ENCODE measurements at regions of chr2 and their contacts with region 1.

Region 1: GRCh38 chr2:174341286-174341994 is 6.7 kb downstream of the SP9 start:
- DNase-seq: peak; percentile 80 to 92 (median 87)
- ATAC-seq: peak; percentile 78
- H3K4me3 ChIP-seq: no peak overlapping the region
- H3K4me3 Mint-ChIP-seq: peak overlapping the region; percentile 87
- H3K27ac ChIP-seq: no peak overlapping the region
- H3K27ac Mint-ChIP-seq: peak overlapping the region; percentile 63
- H3K4me1 ChIP-seq: peaks cover 55% of the 10 kb centered on the region
- H3K4me1 Mint-ChIP-seq: peaks cover 46% of the 10 kb centered on the region
- H3K27me3 ChIP-seq: peaks cover 60 to 87% of the 10 kb centered on the region in 2 experiments
- H3K27me3 Mint-ChIP-seq: peaks cover 82% of the 10 kb centered on the region
- CTCF ChIP-seq: peak; percentile 98

Region 2: GRCh38 chr2:173221937-173222594 is 1119.4 kb before region 1 on chr2:
- CTCF ChIA-PET with region 1: no interaction called
- POLR2A ChIA-PET with region 1: no interaction called
- intact Hi-C with region 1: loop called in 1 of 2 experiments (anchors 10 kb)
- DNase-seq: no peak
- ATAC-seq: no peak
- H3K4me3 ChIP-seq: no peak overlapping the region
- H3K4me3 Mint-ChIP-seq: no peak overlapping the region
- H3K27ac ChIP-seq: no peak overlapping the region
- H3K27ac Mint-ChIP-seq: no peak overlapping the region
- H3K4me1 ChIP-seq: peaks cover 3% of the 10 kb centered on the region
- H3K4me1 Mint-ChIP-seq: peaks cover 5% of the 10 kb centered on the region
- H3K27me3 ChIP-seq: no peaks in the 10 kb centered on the region
- H3K27me3 Mint-ChIP-seq: no peaks in the 10 kb centered on the region
- CTCF ChIP-seq: no peak

Region 3: DNA sequence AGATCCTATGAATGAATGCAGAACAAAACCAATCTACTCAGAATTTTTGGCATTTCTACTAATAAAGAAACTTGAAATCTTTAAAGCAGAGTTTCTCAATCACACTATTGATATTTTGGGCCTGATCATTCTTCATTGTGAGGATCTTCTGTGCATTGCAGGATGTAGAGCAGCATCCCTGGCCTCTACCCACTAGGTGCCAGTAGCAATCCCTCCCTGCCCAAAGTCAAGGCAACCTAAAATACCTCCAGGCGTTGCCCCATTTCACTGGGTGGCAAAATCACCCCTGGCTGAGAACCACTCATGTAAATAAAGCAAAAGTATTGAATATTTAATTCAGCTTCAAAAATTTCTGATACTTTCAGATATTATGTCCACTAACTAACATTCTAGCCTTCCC is 589.3 kb before region 1 on chr2:
- CTCF ChIA-PET with region 1: no interaction called
- POLR2A ChIA-PET with region 1: no interaction called
- intact Hi-C with region 1: loop called (anchors 1 to 10 kb)
- DNase-seq: peak in 3 of 14 experiments; percentile 12 to 16 (median 13)
- ATAC-seq: no peak
- H3K4me3 ChIP-seq: no peak overlapping the region
- H3K4me3 Mint-ChIP-seq: no peak overlapping the region
- H3K27ac ChIP-seq: no peak overlapping the region
- H3K27ac Mint-ChIP-seq: no peak overlapping the region
- H3K4me1 ChIP-seq: no peaks in the 10 kb centered on the region
- H3K4me1 Mint-ChIP-seq: no peaks in the 10 kb centered on the region
- H3K27me3 ChIP-seq: no peaks in the 10 kb centered on the region
- H3K27me3 Mint-ChIP-seq: no peaks in the 10 kb centered on the region
- CTCF ChIP-seq: no peak

Region 4: GRCh38 chr2:173793709-173794565 is 547.5 kb before region 1 on chr2:
- CTCF ChIA-PET with region 1: no interaction called
- POLR2A ChIA-PET with region 1: no interaction called
- intact Hi-C with region 1: no loop called
- DNase-seq: no peak
- ATAC-seq: no peak
- H3K4me3 ChIP-seq: no peak overlapping the region
- H3K4me3 Mint-ChIP-seq: no peak overlapping the region
- H3K27ac ChIP-seq: no peak overlapping the region
- H3K27ac Mint-ChIP-seq: no peak overlapping the region
- H3K4me1 ChIP-seq: no peaks in the 10 kb centered on the region
- H3K4me1 Mint-ChIP-seq: no peaks in the 10 kb centered on the region
- H3K27me3 ChIP-seq: peaks cover 0 to 2% of the 10 kb centered on the region in 2 experiments
- H3K27me3 Mint-ChIP-seq: peaks cover 10% of the 10 kb centered on the region
- CTCF ChIP-seq: no peak

Region 5: DNA sequence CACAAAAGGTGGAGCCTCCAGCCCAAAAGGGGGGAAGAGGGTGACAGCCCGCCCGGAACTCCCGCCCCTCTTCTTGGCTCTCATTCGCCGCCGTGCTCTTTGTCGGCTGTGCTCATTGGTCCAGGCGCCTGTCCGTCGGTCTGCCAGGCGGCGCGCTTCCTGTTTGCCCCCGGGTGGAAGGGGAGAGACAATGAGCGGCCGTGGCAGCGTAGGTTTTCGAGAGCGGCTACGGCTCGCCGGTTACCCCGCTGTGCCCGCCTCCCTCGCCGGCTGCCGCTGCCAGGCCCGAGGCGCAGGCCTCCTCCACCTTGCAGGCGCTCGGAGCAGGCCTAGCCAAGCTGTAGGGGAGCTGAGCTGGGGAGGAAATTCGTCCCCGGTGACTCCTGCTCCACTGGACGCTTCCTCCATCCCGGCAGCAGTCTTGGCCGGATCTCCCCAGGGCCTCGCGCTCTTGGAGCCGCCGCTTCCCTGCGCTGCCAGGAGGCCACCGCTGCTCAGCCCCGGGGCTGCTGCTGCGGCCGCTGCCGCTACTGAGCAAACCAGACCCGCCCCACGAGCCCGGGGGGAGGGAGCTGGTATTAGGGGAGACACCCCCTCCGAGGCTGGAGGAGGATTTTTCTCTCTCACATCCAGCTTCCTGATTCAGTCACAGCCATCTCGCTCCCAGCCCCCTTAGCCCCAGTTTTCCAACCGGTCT is 376.0 kb before region 1 on chr2 and contains the start of gene SP3:
- CTCF ChIA-PET with region 1: no interaction called
- POLR2A ChIA-PET with region 1: interaction called, 5 read pairs
- intact Hi-C with region 1: loop called (anchors 5 kb)
- DNase-seq: peak; percentile 91 to 98 (median 95)
- ATAC-seq: peak; percentile 65
- H3K4me3 ChIP-seq: peak within 1 kb of the TSS; percentile 85
- H3K4me3 Mint-ChIP-seq: peak within 1 kb of the TSS; percentile 99
- H3K27ac ChIP-seq: peak within 1 kb of the TSS; percentile 95 to 99
- H3K27ac Mint-ChIP-seq: peak within 1 kb of the TSS; percentile 98
- H3K4me1 ChIP-seq: peaks cover 14% of the 10 kb centered on the region
- H3K4me1 Mint-ChIP-seq: peaks cover 45% of the 10 kb centered on the region
- H3K27me3 ChIP-seq: no peaks in the 10 kb centered on the region
- H3K27me3 Mint-ChIP-seq: no peaks in the 10 kb centered on the region
- CTCF ChIP-seq: no peak
- total RNA-seq, gene SP3: 159 to 166 TPM

Region 6: DNA sequence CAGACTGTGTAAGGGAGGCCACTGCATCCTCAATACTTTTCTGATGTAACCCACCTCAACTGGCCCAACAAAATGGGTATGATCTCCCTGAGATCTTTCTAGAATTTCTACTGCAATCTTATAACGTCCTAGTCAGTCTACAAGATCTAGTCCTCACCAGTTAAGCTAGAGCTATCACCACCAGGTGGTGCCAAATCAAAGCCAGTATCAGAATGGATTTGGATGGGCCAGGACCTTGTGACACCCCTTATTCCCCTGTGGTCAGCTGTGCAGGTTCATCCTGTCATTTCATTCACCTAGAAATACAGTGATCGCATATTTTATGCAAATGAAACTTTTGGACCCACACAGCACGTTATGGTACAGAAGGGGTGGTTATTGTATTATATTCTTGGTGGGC is 183.4 kb before region 1 on chr2:
- CTCF ChIA-PET with region 1: no interaction called
- POLR2A ChIA-PET with region 1: no interaction called
- intact Hi-C with region 1: loop called (anchors 1 to 2 kb)
- DNase-seq: peak in 5 of 14 experiments; percentile 1 to 51 (median 27)
- ATAC-seq: no peak
- H3K4me3 ChIP-seq: no peak overlapping the region
- H3K4me3 Mint-ChIP-seq: no peak overlapping the region
- H3K27ac ChIP-seq: no peak overlapping the region
- H3K27ac Mint-ChIP-seq: no peak overlapping the region
- H3K4me1 ChIP-seq: no peaks in the 10 kb centered on the region
- H3K4me1 Mint-ChIP-seq: no peaks in the 10 kb centered on the region
- H3K27me3 ChIP-seq: no peaks in the 10 kb centered on the region
- H3K27me3 Mint-ChIP-seq: no peaks in the 10 kb centered on the region
- CTCF ChIP-seq: peak; percentile 38

Region 7: GRCh38 chr2:176079831-176080539 is 1738.5 kb after region 1 on chr2:
- CTCF ChIA-PET with region 1: no interaction called
- POLR2A ChIA-PET with region 1: interaction called, 3 read pairs
- intact Hi-C with region 1: loop called (anchors 5 to 10 kb)
- DNase-seq: peak in 2 of 14 experiments; percentile 16 to 41
- ATAC-seq: no peak
- H3K4me3 ChIP-seq: no peak overlapping the region
- H3K4me3 Mint-ChIP-seq: peak overlapping the region; percentile 73
- H3K27ac ChIP-seq: no peak overlapping the region
- H3K27ac Mint-ChIP-seq: peak overlapping the region; percentile 83
- H3K4me1 ChIP-seq: peaks cover 30% of the 10 kb centered on the region
- H3K4me1 Mint-ChIP-seq: peaks cover 29% of the 10 kb centered on the region
- H3K27me3 ChIP-seq: peaks cover 85 to 92% of the 10 kb centered on the region in 2 experiments
- H3K27me3 Mint-ChIP-seq: peaks cover 86% of the 10 kb centered on the region
- CTCF ChIP-seq: no peak

Measured in CD4-positive, alpha-beta T cell (primary cell).